PC-9 (cell line): ENCODE measurements at regions of chr19 and their contacts with region 1.

Region 1: GRCh38 chr19:18514800-18515651 is 6.8 kb downstream of the ELL start:
- DNase-seq: peak; percentile 80 to 98
- H3K4me3 ChIP-seq: peak overlapping the region; percentile 34; the same call in 1 of the 2 replicates
- H3K27ac ChIP-seq: peak overlapping the region; percentile 86
- H3K4me1 ChIP-seq: peaks cover 65% of the 10 kb centered on the region
- H3K27me3 ChIP-seq: no peaks in the 10 kb centered on the region
- CTCF ChIP-seq: peak; percentile 24; the same call in 1 of the 2 replicates

Region 2: GRCh38 chr19:18487576-18488229 is 27.3 kb before region 1 on chr19:
- CTCF ChIA-PET with region 1: no interaction called
- POLR2A ChIA-PET with region 1: no interaction called
- intact Hi-C with region 1: loop called (anchors 2 kb)
- DNase-seq: peak in 1 of 2 experiments; percentile 30
- H3K4me3 ChIP-seq: no peak overlapping the region
- H3K27ac ChIP-seq: no peak overlapping the region
- H3K4me1 ChIP-seq: peaks cover 10% of the 10 kb centered on the region; the same call in 1 of the 2 replicates
- H3K27me3 ChIP-seq: no peaks in the 10 kb centered on the region
- CTCF ChIP-seq: no peak

Region 3: DNA sequence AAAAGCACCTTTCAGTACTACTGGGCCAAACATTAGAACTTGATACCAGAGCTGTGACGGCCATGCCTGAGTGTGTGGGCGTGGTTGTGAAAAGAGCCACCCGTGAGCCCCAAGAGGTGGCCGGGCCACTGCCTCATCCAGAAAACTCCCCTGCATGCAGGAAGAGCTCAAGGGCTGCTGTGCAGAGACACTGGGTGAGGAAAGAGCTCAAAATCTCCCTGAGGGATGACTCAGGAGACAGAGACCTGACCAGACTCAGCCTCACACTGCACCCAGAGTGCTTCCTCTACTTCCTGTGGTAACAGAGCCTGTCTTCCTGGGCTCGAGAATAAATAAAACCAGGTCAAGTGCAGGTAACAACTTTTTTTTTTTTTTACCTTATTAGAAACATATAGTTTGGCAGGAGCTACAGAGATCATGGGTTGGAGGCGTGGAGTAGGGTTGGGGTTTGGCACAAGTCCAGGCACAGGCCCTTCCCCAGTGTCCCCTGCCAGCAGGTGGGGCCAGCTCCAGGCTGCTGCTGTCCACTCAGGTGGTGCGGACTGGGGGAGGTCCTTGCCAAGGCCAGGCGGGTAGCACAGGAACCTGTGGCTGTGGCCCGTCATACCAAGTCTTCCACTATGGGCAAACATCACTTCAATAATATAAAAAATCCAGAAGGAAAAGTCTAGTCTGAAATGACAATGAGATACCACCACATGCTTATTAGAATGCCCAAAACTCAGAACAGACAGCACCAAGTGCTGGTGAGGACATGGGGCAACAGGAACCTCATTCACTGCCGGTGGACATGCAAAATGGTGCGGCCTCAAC is 18.7 kb before region 1 on chr19:
- CTCF ChIA-PET with region 1: interaction called, 5 read pairs
- POLR2A ChIA-PET with region 1: interaction called, 11 read pairs
- intact Hi-C with region 1: no loop called
- DNase-seq: peak; percentile 69 to 83
- H3K4me3 ChIP-seq: no peak overlapping the region
- H3K27ac ChIP-seq: peak overlapping the region; percentile 29
- H3K4me1 ChIP-seq: peaks cover 24% of the 10 kb centered on the region
- H3K27me3 ChIP-seq: no peaks in the 10 kb centered on the region
- CTCF ChIP-seq: no peak; the same call in 1 of the 2 replicates